ENCODE measurements at regions of chr15 and their contacts with region 1.

Region 1: GRCh38 chr15:88274553-88275460 is 18.3 kb upstream of the NTRK3 start:
- ATAC-seq: peak; percentile 85 to 97 (median 92)
- H3K4me3 ChIP-seq: no peak overlapping the region
- H3K27ac ChIP-seq: no peak overlapping the region
- H3K4me1 ChIP-seq: peaks cover 0 to 2% of the 10 kb centered on the region in 2 donors

Region 2: DNA sequence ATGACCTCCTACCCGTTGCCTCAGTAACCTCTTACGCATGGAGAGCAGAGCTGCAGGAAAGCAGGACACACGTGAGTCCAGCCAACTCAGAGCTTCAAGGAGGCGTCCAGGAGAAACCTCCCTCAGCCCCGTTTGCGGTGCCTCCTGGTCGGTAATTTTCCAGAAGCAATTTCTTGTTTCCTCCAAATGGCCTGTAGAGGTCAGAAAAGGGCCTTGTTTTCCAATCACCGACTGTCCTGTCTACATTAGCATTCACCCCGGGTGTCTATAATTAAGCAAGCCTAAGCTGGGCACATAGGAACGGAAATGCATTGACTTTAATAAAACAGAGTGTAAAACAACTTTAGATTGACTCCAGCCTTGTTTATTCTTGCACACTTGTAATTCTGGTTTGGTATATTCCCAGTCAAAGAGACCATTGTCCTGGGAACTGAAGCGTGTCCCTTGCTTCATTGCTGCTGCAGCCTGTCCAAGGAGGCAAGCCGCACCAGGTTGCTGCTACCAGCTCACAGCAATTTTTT is 1358.9 kb before region 1 on chr15:
- in situ Hi-C with region 1: loop called in 3 of 9 experiments (anchors 25 kb)
- ATAC-seq: peak; percentile 49 to 96 (median 66)
- H3K4me3 ChIP-seq: no peak overlapping the region
- H3K27ac ChIP-seq: no peak overlapping the region
- H3K4me1 ChIP-seq: peaks cover 21 to 25% of the 10 kb centered on the region in 2 donors

Region 3: GRCh38 chr15:88365124-88365523 is 90.3 kb after region 1 on chr15:
- in situ Hi-C with region 1: loop called in 1 of 9 experiments (anchors 25 kb)
- ATAC-seq: peak in 3 of 8 experiments; percentile 47 to 70 (median 55)
- H3K4me3 ChIP-seq: no peak overlapping the region
- H3K27ac ChIP-seq: no peak overlapping the region
- H3K4me1 ChIP-seq: no peaks in the 10 kb centered on the region

Region 4: GRCh38 chr15:88440021-88440420 is 165.2 kb after region 1 on chr15:
- in situ Hi-C with region 1: loop called in 1 of 9 experiments (anchors 25 kb)
- ATAC-seq: peak in 2 of 8 experiments; percentile 57 to 72
- H3K4me3 ChIP-seq: no peak overlapping the region
- H3K27ac ChIP-seq: no peak overlapping the region
- H3K4me1 ChIP-seq: no peaks in the 10 kb centered on the region